Transverse colon (tissue), 4 donors: ENCODE measurements at regions of chr6 and their contacts with region 1.

Region 1: GRCh38 chr6:86459978-86460377 is 477.4 kb upstream of the HTR1E start:
- DNase-seq: no peak
- H3K4me3 ChIP-seq: no peak overlapping the region
- H3K27ac ChIP-seq: no peak overlapping the region
- H3K4me1 ChIP-seq: no peaks in the 10 kb centered on the region
- H3K27me3 ChIP-seq: no peaks in the 10 kb centered on the region
- CTCF ChIP-seq: no peak
- EP300 ChIP-seq: no peak
- POLR2A ChIP-seq: no peak

Region 2: DNA sequence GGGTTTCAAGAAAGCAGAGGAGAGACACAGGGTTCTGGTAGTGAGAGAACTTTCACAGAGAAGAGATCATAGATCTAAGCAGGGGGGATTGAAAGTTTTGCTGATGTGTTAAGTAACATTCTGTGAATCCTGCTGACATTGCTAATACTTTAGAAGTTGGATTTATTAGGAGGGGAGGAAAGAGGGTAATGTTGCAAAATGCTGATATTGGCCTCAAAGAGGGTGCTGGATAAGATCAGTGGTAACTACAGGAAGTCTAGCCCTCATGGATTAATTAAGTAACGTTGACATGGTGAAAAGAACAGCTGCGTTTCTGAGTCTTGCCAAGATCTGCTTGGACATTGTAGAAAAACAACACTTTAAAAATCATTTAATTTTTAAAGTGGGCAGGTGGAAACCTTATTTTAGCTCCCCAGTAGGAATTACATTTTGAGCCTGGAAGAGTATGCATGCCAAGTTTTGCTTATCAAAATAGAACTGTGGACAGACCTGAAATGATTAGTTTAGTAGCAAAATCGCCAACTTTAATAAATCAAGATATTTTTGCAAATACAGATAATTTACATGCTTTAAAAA is 128.6 kb before region 1 on chr6:
- in situ Hi-C with region 1: no loop called
- intact Hi-C with region 1: loop called (anchors 10 kb)
- DNase-seq: no peak
- H3K4me3 ChIP-seq: no peak overlapping the region
- H3K27ac ChIP-seq: no peak overlapping the region
- H3K4me1 ChIP-seq: no peaks in the 10 kb centered on the region
- H3K27me3 ChIP-seq: no peaks in the 10 kb centered on the region
- CTCF ChIP-seq: no peak
- EP300 ChIP-seq: no peak
- POLR2A ChIP-seq: no peak

Region 3: DNA sequence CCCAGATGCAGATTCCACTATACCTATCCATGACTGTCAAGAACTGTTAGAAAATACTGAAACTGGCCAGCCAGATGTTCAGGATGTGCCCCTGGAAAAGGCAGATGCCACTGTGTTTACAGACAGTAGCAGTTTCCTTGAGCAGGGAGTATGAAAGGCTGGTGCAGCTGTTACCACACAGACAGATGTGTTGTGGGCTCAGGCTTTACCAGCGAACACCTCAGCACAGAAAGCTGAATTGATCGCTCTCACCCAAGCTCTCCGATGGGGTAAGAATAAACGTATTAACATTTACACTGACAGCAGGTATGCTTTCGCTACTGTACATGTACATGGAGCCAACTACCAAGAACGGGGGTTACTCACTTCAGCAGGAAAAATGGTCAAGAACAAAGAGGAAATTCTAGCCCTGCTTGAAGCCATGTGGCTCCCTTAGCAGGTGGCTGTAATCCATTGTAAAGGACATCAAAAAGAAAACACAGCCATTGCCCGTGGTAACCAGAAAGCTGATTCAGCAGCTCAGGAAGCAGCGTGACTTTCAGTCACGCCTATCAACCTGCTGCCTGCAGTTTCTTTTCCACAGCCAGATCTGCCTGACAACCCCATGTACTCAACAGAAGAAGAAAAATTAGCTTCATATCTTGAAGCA is 17.6 kb after region 1 on chr6:
- in situ Hi-C with region 1: no loop called
- intact Hi-C with region 1: no loop called
- DNase-seq: no peak
- H3K4me3 ChIP-seq: no peak overlapping the region
- H3K27ac ChIP-seq: no peak overlapping the region
- H3K4me1 ChIP-seq: no peaks in the 10 kb centered on the region
- H3K27me3 ChIP-seq: no peaks in the 10 kb centered on the region
- CTCF ChIP-seq: no peak
- EP300 ChIP-seq: no peak
- POLR2A ChIP-seq: no peak